ENCODE measurements at regions of chr10 and their contacts with region 1.

Region 1: DNA sequence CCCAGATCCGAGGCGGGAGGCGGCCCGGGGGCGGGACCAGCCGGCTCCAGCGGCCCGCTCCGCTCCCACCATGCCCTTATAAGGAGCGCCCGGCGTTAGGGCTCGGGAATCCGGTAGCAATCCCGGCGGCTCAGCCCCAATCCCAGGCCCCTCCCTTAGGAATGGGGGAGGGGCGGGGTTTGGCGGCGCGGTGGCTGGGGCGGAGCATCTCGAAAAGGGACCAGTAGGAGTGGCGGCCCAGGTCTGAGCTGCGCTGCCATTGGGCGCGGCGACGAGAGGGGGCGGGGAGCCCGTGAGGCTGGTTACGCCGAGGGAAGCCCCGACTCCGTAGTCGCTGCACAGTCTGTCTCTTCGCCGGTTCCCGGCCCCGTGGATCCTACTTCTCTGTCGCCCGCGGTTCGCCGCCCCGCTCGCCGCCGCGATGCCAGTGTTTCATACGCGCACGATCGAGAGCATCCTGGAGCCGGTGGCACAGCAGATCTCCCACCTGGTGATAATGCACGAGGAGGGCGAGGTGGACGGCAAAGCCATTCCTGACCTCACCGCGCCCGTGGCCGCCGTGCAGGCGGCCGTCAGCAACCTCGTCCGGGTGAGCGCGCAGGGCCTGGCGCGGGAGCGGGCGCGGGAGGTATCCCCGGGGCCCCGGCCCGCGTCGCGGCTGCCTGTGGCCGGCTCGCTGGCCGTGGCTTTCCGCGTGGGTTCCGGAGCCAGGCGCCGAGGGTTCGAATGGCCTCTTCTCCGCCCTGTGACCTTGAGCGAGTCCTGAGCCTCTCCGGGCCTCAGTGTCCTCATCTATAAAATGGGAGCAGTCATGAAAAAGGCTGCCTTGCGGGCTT is at the start of gene VCL:
- DNase-seq: peak; percentile 100
- H3K4me3 Mint-ChIP-seq: peak within 1 kb of the TSS; percentile 97
- H3K27ac Mint-ChIP-seq: peak within 1 kb of the TSS; percentile 98
- H3K4me1 Mint-ChIP-seq: peaks cover 49% of the 10 kb centered on the region
- H3K27me3 Mint-ChIP-seq: no peaks in the 10 kb centered on the region
- CTCF ChIP-seq: no peak
- total RNA-seq, gene VCL: 234 and 237 TPM in 2 replicates

Region 2: GRCh38 chr10:73956476-73957359 is 41.3 kb before region 1 on chr10:
- CTCF ChIA-PET with region 1: interaction called, 16 read pairs
- intact Hi-C with region 1: loop called (anchors 2 kb)
- DNase-seq: peak; percentile 77
- H3K4me3 Mint-ChIP-seq: peak overlapping the region; percentile 23
- H3K27ac Mint-ChIP-seq: peak overlapping the region; percentile 48
- H3K4me1 Mint-ChIP-seq: peaks cover 39% of the 10 kb centered on the region
- H3K27me3 Mint-ChIP-seq: no peaks in the 10 kb centered on the region
- CTCF ChIP-seq: no peak

Region 3: GRCh38 chr10:74008212-74008731 is 10.3 kb after region 1 on chr10:
- CTCF ChIA-PET with region 1: interaction called, 4 read pairs
- intact Hi-C with region 1: loop called (anchors 2 kb)
- DNase-seq: no peak
- H3K4me3 Mint-ChIP-seq: no peak overlapping the region
- H3K27ac Mint-ChIP-seq: no peak overlapping the region
- H3K4me1 Mint-ChIP-seq: peaks cover 53% of the 10 kb centered on the region
- H3K27me3 Mint-ChIP-seq: no peaks in the 10 kb centered on the region
- CTCF ChIP-seq: no peak

Region 4: GRCh38 chr10:74047868-74048267 is 49.9 kb after region 1 on chr10:
- CTCF ChIA-PET with region 1: interaction called, 14 read pairs
- intact Hi-C with region 1: no loop called
- DNase-seq: peak; percentile 57
- H3K4me3 Mint-ChIP-seq: no peak overlapping the region
- H3K27ac Mint-ChIP-seq: peak overlapping the region; percentile 78
- H3K4me1 Mint-ChIP-seq: peaks cover 62% of the 10 kb centered on the region
- H3K27me3 Mint-ChIP-seq: no peaks in the 10 kb centered on the region
- CTCF ChIP-seq: no peak